Naive thymus-derived CD4-positive, alpha-beta T cell (primary cell): ENCODE measurements at regions of chr9 and their contacts with region 1.

Region 1: GRCh38 chr9:69027355-69028096 is 8.0 kb upstream of the FXN start:
- DNase-seq: peak in 7 of 9 donors; percentile 27 to 67 (median 61)
- ATAC-seq: peak; percentile 88
- H3K4me3 ChIP-seq: no peak overlapping the region
- H3K4me3 Mint-ChIP-seq: peak overlapping the region in 7 of 10 donors; percentile 6 to 61 (median 31)
- H3K27ac ChIP-seq: no peak overlapping the region
- H3K27ac Mint-ChIP-seq: peak overlapping the region in 8 of 9 donors; percentile 2 to 88 (median 62)
- H3K4me1 ChIP-seq: peaks cover 9 to 37% of the 10 kb centered on the region in 2 donors
- H3K4me1 Mint-ChIP-seq: peaks cover 33 to 69% (median 61%) of the 10 kb centered on the region in 7 donors
- H3K27me3 ChIP-seq: no peaks in the 10 kb centered on the region
- H3K27me3 Mint-ChIP-seq: peaks cover 0 to 12% (median 0%) of the 10 kb centered on the region in 5 donors

Region 2: DNA sequence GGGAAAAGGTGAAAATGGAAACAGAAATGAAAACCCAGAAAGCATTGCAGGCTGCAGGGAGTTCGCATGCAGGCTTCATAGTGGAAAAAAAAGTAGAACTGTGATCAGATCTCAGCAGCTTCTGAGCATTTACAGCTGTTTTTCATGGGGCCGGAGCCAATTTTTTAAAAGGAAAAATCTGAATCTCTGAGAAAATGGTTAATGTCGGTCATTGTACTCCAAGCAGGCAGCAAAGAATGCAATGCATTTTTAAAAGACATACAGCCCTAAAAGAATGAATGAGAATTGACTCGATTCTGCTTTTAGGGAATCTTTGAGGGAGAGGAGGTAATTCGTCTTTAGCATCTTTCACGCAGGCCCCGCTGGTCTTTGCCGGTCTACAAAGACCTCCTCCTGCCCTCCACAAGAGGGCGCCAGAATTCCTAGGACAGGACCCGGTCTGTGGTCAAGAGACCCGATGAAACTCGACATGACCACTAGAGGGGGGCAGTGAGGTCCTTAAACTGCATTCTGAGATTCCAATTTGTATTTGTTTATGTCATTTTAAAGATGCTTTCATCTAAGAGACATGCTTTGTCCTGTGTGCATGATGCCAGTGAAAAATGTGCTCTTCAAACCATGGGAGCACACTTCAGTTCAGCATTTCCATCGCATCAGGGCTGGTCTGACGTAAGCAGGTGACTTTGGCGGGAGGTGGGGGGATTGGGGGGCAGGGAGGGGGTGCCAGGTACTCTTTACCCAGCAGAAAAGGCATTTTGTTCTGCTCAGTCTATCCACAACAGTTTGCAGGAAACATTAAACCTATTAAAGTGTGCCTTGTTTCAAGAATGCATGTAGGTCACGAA is 443.1 kb before region 1 on chr9:
- CTCF ChIA-PET with region 1: interaction called, 8 read pairs
- POLR2A ChIA-PET with region 1: no interaction called
- intact Hi-C with region 1: loop called (anchors 1 kb)
- DNase-seq: peak; percentile 64 to 89 (median 80)
- ATAC-seq: peak; percentile 100
- H3K4me3 ChIP-seq: no peak overlapping the region
- H3K4me3 Mint-ChIP-seq: no peak overlapping the region
- H3K27ac ChIP-seq: no peak overlapping the region
- H3K27ac Mint-ChIP-seq: peak overlapping the region in 1 of 9 donors; percentile 63
- H3K4me1 ChIP-seq: no peaks in the 10 kb centered on the region
- H3K4me1 Mint-ChIP-seq: peaks cover 0 to 5% (median 0%) of the 10 kb centered on the region in 7 donors
- H3K27me3 ChIP-seq: no peaks in the 10 kb centered on the region
- H3K27me3 Mint-ChIP-seq: peaks cover 0 to 14% (median 10%) of the 10 kb centered on the region in 5 donors

Region 3: GRCh38 chr9:68704814-68705530 is 322.6 kb before region 1 on chr9 and contains the start of gene PIP5K1B:
- CTCF ChIA-PET with region 1: no interaction called
- POLR2A ChIA-PET with region 1: no interaction called
- intact Hi-C with region 1: loop called in 1 of 2 experiments (anchors 5 kb)
- DNase-seq: peak in 6 of 9 donors; percentile 2 to 77 (median 13)
- ATAC-seq: peak; percentile 87
- H3K4me3 ChIP-seq: no peak within 1 kb of the TSS
- H3K4me3 Mint-ChIP-seq: peak within 1 kb of the TSS; percentile 67 to 95 (median 80)
- H3K27ac ChIP-seq: no peak within 1 kb of the TSS
- H3K27ac Mint-ChIP-seq: peak within 1 kb of the TSS in 1 of 9 donors; percentile 70
- H3K4me1 ChIP-seq: peaks cover 0 to 6% of the 10 kb centered on the region in 2 donors
- H3K4me1 Mint-ChIP-seq: peaks cover 5 to 25% (median 20%) of the 10 kb centered on the region in 7 donors
- H3K27me3 ChIP-seq: peaks cover 3 to 14% of the 10 kb centered on the region in 2 donors
- H3K27me3 Mint-ChIP-seq: peaks cover 74 to 86% (median 77%) of the 10 kb centered on the region in 5 donors
- total RNA-seq, gene PIP5K1B: 0.22 to 4.2 (median 1.5) TPM

Region 4: DNA sequence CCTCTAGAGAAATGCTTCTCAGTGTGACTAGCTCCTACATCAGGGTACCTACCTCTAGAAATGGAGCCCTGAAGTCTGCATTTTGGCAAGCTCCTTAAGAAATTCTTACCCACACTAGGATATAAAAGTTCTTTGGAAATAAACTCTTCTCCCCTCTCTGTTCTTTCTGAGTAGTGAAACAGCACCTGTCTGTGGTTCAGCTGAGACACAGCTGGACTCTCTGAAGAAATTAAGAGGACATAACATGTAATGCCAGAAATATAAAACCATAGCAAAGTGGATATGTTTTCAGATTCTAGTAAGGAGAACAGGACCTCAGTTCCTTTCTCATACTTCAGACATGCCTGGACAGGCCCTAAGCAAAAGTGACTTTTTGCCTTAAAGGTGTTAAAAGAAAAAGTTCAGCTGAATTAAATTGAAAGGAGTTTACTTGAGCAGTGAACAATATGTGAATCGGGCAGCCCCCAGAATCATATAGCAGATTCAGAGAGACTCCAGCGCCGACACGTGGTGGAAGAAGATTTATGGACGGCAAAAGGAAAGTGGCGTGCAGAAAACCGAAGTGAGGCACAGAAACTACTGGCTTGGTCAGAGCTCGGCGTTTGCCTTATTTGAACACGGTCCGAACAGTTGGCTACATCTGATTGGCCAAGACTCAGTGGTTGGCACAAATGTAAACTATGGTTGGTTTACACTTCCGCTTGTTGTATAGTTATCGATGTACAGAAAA is 78.1 kb before region 1 on chr9:
- CTCF ChIA-PET with region 1: interaction called, 7 read pairs
- POLR2A ChIA-PET with region 1: no interaction called
- intact Hi-C with region 1: loop called in 1 of 2 experiments (anchors 1 kb)
- DNase-seq: peak in 7 of 9 donors; percentile 15 to 32 (median 24)
- ATAC-seq: no peak
- H3K4me3 ChIP-seq: no peak overlapping the region
- H3K4me3 Mint-ChIP-seq: peak overlapping the region in 1 of 10 donors; percentile 21
- H3K27ac ChIP-seq: no peak overlapping the region
- H3K27ac Mint-ChIP-seq: peak overlapping the region in 2 of 9 donors; percentile 43 to 57
- H3K4me1 ChIP-seq: no peaks in the 10 kb centered on the region
- H3K4me1 Mint-ChIP-seq: peaks cover 0 to 36% (median 0%) of the 10 kb centered on the region in 7 donors
- H3K27me3 ChIP-seq: no peaks in the 10 kb centered on the region
- H3K27me3 Mint-ChIP-seq: peaks cover 0 to 16% (median 0%) of the 10 kb centered on the region in 5 donors

Region 5: GRCh38 chr9:68955330-68955729 is 72.2 kb before region 1 on chr9:
- CTCF ChIA-PET with region 1: interaction called, 7 read pairs
- POLR2A ChIA-PET with region 1: no interaction called
- intact Hi-C with region 1: loop called in 1 of 2 experiments (anchors 5 kb)
- DNase-seq: peak in 1 of 9 donors; percentile 8
- ATAC-seq: peak; percentile 32
- H3K4me3 ChIP-seq: no peak overlapping the region
- H3K4me3 Mint-ChIP-seq: peak overlapping the region in 6 of 10 donors; percentile 16 to 45 (median 35)
- H3K27ac ChIP-seq: no peak overlapping the region
- H3K27ac Mint-ChIP-seq: peak overlapping the region in 3 of 9 donors; percentile 1 to 44 (median 43)
- H3K4me1 ChIP-seq: peaks cover 0 to 12% of the 10 kb centered on the region in 2 donors
- H3K4me1 Mint-ChIP-seq: peaks cover 4 to 24% (median 12%) of the 10 kb centered on the region in 7 donors
- H3K27me3 ChIP-seq: no peaks in the 10 kb centered on the region
- H3K27me3 Mint-ChIP-seq: peaks cover 0 to 15% (median 2%) of the 10 kb centered on the region in 5 donors

Region 6: GRCh38 chr9:68981789-68982188 is 45.7 kb before region 1 on chr9:
- CTCF ChIA-PET with region 1: interaction called, 3 read pairs
- POLR2A ChIA-PET with region 1: no interaction called
- intact Hi-C with region 1: loop called in 1 of 2 experiments (anchors 5 kb)
- DNase-seq: no peak
- ATAC-seq: no peak
- H3K4me3 ChIP-seq: no peak overlapping the region
- H3K4me3 Mint-ChIP-seq: no peak overlapping the region
- H3K27ac ChIP-seq: no peak overlapping the region
- H3K27ac Mint-ChIP-seq: peak overlapping the region in 1 of 9 donors; percentile 47
- H3K4me1 ChIP-seq: no peaks in the 10 kb centered on the region
- H3K4me1 Mint-ChIP-seq: peaks cover 7 to 52% (median 17%) of the 10 kb centered on the region in 7 donors
- H3K27me3 ChIP-seq: no peaks in the 10 kb centered on the region
- H3K27me3 Mint-ChIP-seq: no peaks in the 10 kb centered on the region

Region 7: DNA sequence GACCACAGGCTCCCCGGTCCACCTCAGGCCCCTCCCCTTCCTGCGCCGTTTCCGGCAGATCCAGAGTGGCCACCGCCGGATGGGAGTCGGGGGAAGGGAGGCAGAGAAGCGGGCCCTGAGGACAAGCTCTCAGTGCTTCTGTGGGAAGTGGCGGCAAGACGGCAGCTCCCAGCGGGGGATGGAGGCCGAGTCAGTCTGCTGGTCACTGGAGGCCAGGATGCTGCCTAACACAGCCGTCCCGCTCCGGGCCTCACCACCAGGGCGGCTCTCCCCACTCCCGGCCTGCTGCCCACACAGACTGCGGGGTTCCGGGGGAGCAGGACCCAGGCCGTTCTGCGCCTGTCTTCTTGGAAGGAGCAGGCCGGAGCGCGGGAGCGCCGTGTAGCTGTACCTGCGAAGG is 39.4 kb after region 1 on chr9:
- CTCF ChIA-PET with region 1: no interaction called
- POLR2A ChIA-PET with region 1: no interaction called
- intact Hi-C with region 1: no loop called
- DNase-seq: no peak
- ATAC-seq: no peak
- H3K4me3 ChIP-seq: no peak overlapping the region
- H3K4me3 Mint-ChIP-seq: no peak overlapping the region
- H3K27ac ChIP-seq: no peak overlapping the region
- H3K27ac Mint-ChIP-seq: no peak overlapping the region
- H3K4me1 ChIP-seq: no peaks in the 10 kb centered on the region
- H3K4me1 Mint-ChIP-seq: peaks cover 0 to 3% (median 0%) of the 10 kb centered on the region in 7 donors
- H3K27me3 ChIP-seq: no peaks in the 10 kb centered on the region
- H3K27me3 Mint-ChIP-seq: no peaks in the 10 kb centered on the region